ENCODE measurements at regions of chr11 and their contacts with region 1.

Region 1: DNA sequence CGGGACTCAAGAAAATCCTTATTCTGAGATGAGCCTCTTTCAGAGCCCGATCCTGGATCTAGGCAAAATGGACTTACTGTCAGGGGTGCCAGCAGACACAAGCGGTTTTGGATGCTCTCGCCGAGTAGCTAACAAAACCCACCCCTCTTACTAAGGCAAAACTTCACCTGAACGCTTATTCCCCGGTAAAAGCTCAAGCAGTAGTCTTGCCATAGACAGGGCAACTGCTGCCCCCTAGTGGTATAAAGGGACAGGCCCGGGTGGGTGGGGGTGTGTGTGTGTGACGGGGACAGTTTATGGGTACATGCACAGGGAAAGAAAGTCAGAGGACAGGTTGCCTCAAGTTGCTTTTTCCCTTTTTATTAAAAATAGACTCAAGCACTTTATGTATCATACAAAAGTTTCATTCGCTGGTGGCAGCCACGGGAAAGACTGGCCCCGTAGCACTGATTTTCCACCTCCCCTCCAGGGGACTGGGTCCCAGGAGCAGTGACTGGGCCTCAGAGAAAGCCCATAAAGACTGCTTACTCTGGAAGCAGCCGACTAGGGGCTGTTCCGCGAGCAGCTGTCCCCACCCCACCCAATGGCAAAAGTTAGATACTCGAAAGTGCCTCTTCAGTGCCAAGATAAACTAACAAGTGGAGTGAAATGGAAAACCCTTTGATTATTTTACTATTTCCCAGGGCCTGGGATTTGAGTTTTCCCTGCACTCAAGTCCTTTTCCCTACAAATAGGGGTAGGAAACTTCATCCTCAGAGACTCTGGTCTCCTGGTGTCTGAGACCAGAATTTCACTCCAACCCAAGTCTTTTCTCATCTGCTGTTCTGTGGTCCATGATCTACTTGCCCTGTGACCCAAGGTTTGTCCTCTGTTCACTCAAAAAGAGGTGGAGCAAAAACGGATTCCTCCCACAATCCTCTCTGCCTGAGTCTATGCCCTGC is 4.7 kb downstream of the YPEL4 start:
- DNase-seq: peak; percentile 76 to 85
- ATAC-seq: peak; percentile 60 to 76; a peak in 5 of 6 replicates
- H3K4me3 ChIP-seq: no peak overlapping the region
- H3K27ac ChIP-seq: no peak overlapping the region
- H3K4me1 ChIP-seq: peaks cover 32% of the 10 kb centered on the region
- CTCF ChIP-seq: peak; percentile 88
- EP300 ChIP-seq: no peak
- POLR2A ChIP-seq: no peak
- RAD21 ChIP-seq: peak; percentile 74 to 76

Region 2: DNA sequence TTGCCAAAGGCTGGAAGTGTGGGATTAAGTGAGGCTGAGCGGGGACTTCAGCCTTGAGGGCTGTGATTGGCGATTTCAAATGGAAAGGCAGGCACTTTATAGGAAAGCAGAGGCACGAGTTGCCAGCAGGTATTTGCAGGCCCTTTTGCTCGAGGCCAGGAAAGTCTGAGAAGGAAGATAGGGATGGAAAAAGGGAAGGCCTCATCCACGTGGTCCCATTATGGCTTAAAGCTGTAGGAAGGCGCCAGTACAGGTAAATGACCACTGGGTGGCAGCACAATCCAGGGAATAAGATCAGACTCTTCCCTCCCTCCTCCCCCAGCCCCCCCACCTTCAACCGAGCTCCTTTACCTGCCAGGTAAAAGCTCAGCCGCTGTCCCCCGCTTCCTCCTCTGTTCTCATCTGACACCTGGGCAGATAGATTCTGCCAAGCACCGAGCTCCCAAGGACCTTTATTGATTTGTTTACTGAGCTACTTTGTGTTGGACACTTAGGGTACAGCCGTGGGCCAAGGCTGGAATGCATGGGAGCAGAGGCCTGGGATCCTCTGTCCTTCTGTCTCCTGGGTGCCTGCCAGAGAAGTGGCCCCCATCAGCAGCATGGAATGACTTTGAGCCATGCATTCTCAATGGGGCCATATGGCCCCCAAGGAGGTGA is 299.3 kb before region 1 on chr11:
- CTCF ChIA-PET with region 1: interaction called, 103 read pairs
- POLR2A ChIA-PET with region 1: no interaction called
- DNase-seq: peak; percentile 81 to 84
- ATAC-seq: peak; percentile 66 to 78
- H3K4me3 ChIP-seq: no peak overlapping the region
- H3K27ac ChIP-seq: peak overlapping the region; percentile 50 to 75; a peak in 5 of 6 replicates
- H3K4me1 ChIP-seq: peaks cover 18% of the 10 kb centered on the region
- CTCF ChIP-seq: peak; percentile 91
- EP300 ChIP-seq: no peak
- POLR2A ChIP-seq: no peak
- RAD21 ChIP-seq: peak; percentile 82 to 97

Region 3: GRCh38 chr11:57562596-57562995 is 82.4 kb before region 1 on chr11:
- CTCF ChIA-PET with region 1: interaction called, 318 read pairs
- POLR2A ChIA-PET with region 1: interaction called, 16 read pairs
- DNase-seq: peak in 1 of 2 experiments; percentile 20
- ATAC-seq: peak in 1 of 2 experiments; percentile 16; a peak in 1 of 6 replicates
- H3K4me3 ChIP-seq: no peak overlapping the region
- H3K27ac ChIP-seq: no peak overlapping the region
- H3K4me1 ChIP-seq: peaks cover 10% of the 10 kb centered on the region; the same call in 2 of the 3 replicates
- CTCF ChIP-seq: no peak
- EP300 ChIP-seq: no peak
- POLR2A ChIP-seq: no peak
- RAD21 ChIP-seq: peak in 1 of 2 experiments; percentile 31; a peak in 1 of 5 replicates

Region 4: GRCh38 chr11:57626895-57627294 is 18.1 kb before region 1 on chr11:
- CTCF ChIA-PET with region 1: interaction called, 24 read pairs
- POLR2A ChIA-PET with region 1: no interaction called
- DNase-seq: no peak
- ATAC-seq: no peak
- H3K4me3 ChIP-seq: no peak overlapping the region
- H3K27ac ChIP-seq: no peak overlapping the region
- H3K4me1 ChIP-seq: no peaks in the 10 kb centered on the region
- CTCF ChIP-seq: no peak
- EP300 ChIP-seq: no peak
- POLR2A ChIP-seq: no peak
- RAD21 ChIP-seq: no peak

Region 5: GRCh38 chr11:57632116-57632515 is 12.9 kb before region 1 on chr11:
- CTCF ChIA-PET with region 1: interaction called, 24 read pairs
- POLR2A ChIA-PET with region 1: no interaction called
- DNase-seq: no peak
- ATAC-seq: no peak
- H3K4me3 ChIP-seq: no peak overlapping the region
- H3K27ac ChIP-seq: no peak overlapping the region
- H3K4me1 ChIP-seq: no peaks in the 10 kb centered on the region
- CTCF ChIP-seq: no peak
- EP300 ChIP-seq: no peak
- POLR2A ChIP-seq: no peak
- RAD21 ChIP-seq: no peak

Region 6: DNA sequence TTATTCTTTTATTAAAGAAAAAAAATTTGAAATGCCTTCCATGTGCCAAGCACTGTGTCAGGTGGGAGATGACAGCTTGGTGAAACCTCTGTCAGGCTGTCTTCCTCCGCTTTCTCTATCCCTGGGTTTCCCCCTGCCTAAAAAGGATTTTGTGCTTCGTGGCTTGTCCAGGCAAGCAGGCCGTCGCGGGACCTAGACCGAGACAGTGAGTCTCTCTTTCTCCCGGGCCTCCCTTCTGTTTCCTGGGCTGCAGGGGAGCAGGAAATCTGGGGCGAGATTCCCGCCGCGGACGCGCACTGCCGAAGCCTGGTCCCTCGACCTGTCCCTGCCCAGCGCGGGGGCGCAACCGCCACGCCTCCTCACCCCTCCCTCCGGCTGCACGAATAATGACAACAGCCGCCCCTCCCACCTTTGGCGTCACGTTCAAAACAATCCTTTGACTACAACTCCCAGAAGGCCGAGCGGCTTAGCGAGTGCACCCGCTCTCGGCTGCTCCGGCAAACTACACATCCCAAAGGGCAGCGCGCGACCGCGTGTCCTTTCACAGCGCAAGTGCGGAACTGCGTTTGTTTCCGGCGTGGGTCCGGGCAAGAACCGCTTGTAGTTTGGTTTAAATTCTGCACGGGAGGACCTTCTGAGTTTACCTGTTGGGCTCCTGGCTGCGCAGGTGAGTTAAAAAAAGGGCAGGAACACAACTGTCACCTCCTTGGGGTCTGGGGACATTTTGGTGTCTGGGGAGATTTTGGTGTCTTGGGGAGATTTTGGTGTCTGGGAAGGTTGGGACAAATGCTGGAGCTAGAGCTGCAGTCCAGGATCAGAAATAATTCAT is 12.4 kb after region 1 on chr11 and contains the start of gene CLP1:
- CTCF ChIA-PET with region 1: interaction called, 21 read pairs
- POLR2A ChIA-PET with region 1: no interaction called
- DNase-seq: peak; percentile 92 to 99
- ATAC-seq: peak; percentile 98 to 99
- H3K4me3 ChIP-seq: peak within 1 kb of the TSS; percentile 63
- H3K27ac ChIP-seq: peak within 1 kb of the TSS; percentile 73 to 84
- H3K4me1 ChIP-seq: peaks cover 11% of the 10 kb centered on the region; the same call in 1 of the 3 replicates
- CTCF ChIP-seq: no peak
- EP300 ChIP-seq: no peak
- POLR2A ChIP-seq: peak; percentile 44
- RAD21 ChIP-seq: no peak
- polyA plus RNA-seq, gene CLP1: 22.8 and 24.2 TPM in 2 replicates

Region 7: GRCh38 chr11:57703341-57703740 is 58.3 kb after region 1 on chr11:
- CTCF ChIA-PET with region 1: no interaction called
- POLR2A ChIA-PET with region 1: no interaction called
- DNase-seq: no peak
- ATAC-seq: no peak
- H3K4me3 ChIP-seq: no peak overlapping the region
- H3K27ac ChIP-seq: no peak overlapping the region
- H3K4me1 ChIP-seq: no peaks in the 10 kb centered on the region
- CTCF ChIP-seq: no peak
- EP300 ChIP-seq: no peak
- POLR2A ChIP-seq: no peak
- RAD21 ChIP-seq: no peak

Region 8: DNA sequence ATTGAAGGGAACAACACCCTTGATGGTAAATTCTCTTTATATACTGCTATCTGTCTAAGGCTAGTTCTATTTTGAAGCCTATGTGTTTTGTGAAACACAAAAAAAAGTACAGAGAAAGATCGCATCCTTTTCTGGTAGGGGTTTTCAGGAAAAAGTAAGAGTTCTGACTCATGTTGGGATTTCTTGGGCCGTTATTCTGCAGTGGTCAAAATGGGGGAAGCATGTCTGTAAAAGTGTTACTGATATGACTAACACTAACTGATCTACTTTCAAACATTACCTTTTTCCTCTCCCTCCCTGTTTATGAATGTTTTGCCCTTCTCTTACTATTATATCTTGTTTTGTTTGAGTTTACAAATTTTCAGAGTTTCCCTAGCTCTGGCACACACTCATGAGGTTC is 170.5 kb after region 1 on chr11:
- CTCF ChIA-PET with region 1: no interaction called
- POLR2A ChIA-PET with region 1: no interaction called
- DNase-seq: no peak
- ATAC-seq: no peak
- H3K4me3 ChIP-seq: no peak overlapping the region
- H3K27ac ChIP-seq: no peak overlapping the region
- H3K4me1 ChIP-seq: no peaks in the 10 kb centered on the region
- CTCF ChIP-seq: no peak
- EP300 ChIP-seq: no peak
- POLR2A ChIP-seq: no peak
- RAD21 ChIP-seq: no peak